Cardiac septum (tissue), 1 donor: ENCODE measurements at regions of chr15 and their contacts with region 1.

Region 1: GRCh38 chr15:38072348-38073177 is 138.1 kb downstream of the TMCO5A start:
- DNase-seq: peak; percentile 81

Region 2: GRCh38 chr15:38354315-38354929 is 281.9 kb after region 1 on chr15:
- intact Hi-C with region 1: loop called (anchors 5 kb)
- DNase-seq: no peak